Naive thymus-derived CD4-positive, alpha-beta T cell (primary cell): ENCODE measurements at regions of chr5 and their contacts with region 1.

Region 1: GRCh38 chr5:56050551-56051255 is 55.9 kb upstream of the IL6ST start:
- DNase-seq: peak in 8 of 9 donors; percentile 4 to 77 (median 66)
- ATAC-seq: peak; percentile 71
- H3K4me3 ChIP-seq: peak overlapping the region; percentile 34
- H3K4me3 Mint-ChIP-seq: peak overlapping the region; percentile 60 to 92 (median 76)
- H3K27ac ChIP-seq: peak overlapping the region; percentile 62
- H3K27ac Mint-ChIP-seq: peak overlapping the region; percentile 77 to 95 (median 89)
- H3K4me1 ChIP-seq: peaks cover 11 to 76% of the 10 kb centered on the region in 2 donors
- H3K4me1 Mint-ChIP-seq: peaks cover 40 to 95% (median 74%) of the 10 kb centered on the region in 7 donors
- H3K27me3 ChIP-seq: no peaks in the 10 kb centered on the region
- H3K27me3 Mint-ChIP-seq: peaks cover 0 to 5% (median 0%) of the 10 kb centered on the region in 5 donors

Region 2: DNA sequence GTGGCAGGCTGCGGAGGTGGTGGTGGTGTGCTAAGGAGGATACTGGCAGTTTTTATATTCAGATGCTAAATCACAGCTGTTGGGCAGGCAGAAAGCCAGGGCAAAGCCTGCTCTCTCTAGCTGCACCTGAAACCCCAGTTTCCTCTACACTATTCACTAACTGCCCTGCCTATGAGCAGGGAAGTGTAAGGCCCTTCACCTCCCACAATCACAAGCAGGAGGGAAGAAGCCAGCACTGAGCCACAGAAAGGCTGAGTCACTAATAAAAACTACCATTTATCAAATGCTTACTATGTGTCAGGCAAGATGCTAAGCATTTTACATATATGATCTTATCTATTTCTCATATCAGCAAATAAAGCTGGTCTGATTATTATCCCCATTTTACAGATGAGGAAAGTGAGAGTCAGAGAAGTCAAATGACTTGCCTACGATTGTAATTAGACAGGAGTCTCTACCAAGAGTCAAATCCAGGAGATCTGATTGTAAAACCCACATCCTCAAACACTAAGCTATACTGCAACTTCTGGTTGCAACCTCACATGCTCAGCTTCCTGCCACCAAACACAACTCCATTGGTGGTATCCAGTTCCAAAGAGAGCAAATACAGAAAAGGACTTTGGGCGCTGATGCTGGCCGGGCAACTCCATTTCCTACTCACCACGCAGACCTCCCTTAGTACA is 38.3 kb before region 1 on chr5:
- CTCF ChIA-PET with region 1: interaction called, 6 read pairs
- POLR2A ChIA-PET with region 1: interaction called, 27 read pairs
- intact Hi-C with region 1: loop called (anchors 1 to 2 kb)
- DNase-seq: peak in 7 of 9 donors; percentile 51 to 84 (median 75)
- ATAC-seq: peak; percentile 91
- H3K4me3 ChIP-seq: no peak overlapping the region
- H3K4me3 Mint-ChIP-seq: peak overlapping the region; percentile 13 to 84 (median 66)
- H3K27ac ChIP-seq: peak overlapping the region; percentile 57
- H3K27ac Mint-ChIP-seq: peak overlapping the region; percentile 71 to 96 (median 89)
- H3K4me1 ChIP-seq: peaks cover 26% of the 10 kb centered on the region in 2 donors
- H3K4me1 Mint-ChIP-seq: peaks cover 26 to 52% (median 49%) of the 10 kb centered on the region in 7 donors
- H3K27me3 ChIP-seq: no peaks in the 10 kb centered on the region
- H3K27me3 Mint-ChIP-seq: no peaks in the 10 kb centered on the region

Region 3: DNA sequence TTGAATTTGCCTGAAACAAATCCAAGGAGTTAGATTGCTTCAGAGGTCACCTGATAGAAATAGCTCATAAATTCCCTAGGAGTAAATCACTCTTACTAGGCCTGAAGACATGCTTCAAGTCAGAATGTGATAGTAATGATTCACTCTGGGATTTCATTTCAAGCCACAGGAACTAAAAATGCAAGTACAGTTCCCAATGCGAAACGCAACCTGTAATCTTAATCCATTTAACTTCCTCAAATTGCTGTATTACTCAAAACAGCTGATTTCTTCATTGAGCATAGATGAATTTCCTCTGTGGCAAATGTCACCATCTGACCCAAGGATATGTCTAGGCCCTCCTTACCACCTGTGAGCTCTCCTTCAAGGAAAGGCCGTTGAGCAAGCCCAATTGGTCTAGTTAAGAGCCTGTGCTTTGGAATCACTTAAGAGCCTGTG is 23.8 kb before region 1 on chr5:
- CTCF ChIA-PET with region 1: no interaction called
- POLR2A ChIA-PET with region 1: interaction called, 4 read pairs
- intact Hi-C with region 1: loop called in 1 of 2 experiments (anchors 2 kb)
- DNase-seq: no peak
- ATAC-seq: peak; percentile 78
- H3K4me3 ChIP-seq: no peak overlapping the region
- H3K4me3 Mint-ChIP-seq: no peak overlapping the region
- H3K27ac ChIP-seq: no peak overlapping the region
- H3K27ac Mint-ChIP-seq: peak overlapping the region in 1 of 9 donors; percentile 65
- H3K4me1 ChIP-seq: peaks cover 0 to 5% of the 10 kb centered on the region in 2 donors
- H3K4me1 Mint-ChIP-seq: peaks cover 3 to 42% (median 23%) of the 10 kb centered on the region in 7 donors
- H3K27me3 ChIP-seq: no peaks in the 10 kb centered on the region
- H3K27me3 Mint-ChIP-seq: peaks cover 0 to 29% (median 0%) of the 10 kb centered on the region in 5 donors

Region 4: DNA sequence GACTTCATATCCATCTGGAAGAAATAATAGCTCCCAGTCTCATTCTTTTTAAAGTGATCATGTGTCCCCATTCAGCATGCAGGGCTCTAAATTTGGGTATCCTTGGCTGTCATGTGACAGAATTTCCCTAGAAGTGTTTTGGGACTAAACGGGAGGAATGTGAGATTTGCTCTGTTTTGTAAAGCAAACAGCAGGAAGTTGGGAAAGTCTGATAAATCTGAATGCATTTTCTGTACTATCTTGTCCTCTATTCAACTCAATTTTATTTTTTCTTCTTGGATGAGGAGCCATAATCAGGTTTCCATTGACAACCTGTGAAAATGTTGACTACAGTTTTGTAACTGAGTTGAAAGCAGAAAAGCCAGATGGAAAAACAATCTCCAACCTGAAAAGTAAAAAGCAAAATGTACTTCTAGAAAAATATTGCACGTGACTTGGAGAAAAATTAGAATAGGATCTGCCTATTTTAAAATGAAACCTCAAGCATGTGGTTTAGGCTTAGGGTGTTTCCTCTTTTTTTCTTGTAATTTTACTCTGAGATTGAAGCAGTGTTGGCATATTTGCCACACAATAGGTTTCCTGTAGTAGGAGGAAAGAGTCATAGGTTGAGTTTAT is 20.3 kb after region 1 on chr5:
- CTCF ChIA-PET with region 1: interaction called, 4 read pairs
- POLR2A ChIA-PET with region 1: interaction called, 9 read pairs
- intact Hi-C with region 1: loop called in 1 of 2 experiments (anchors 2 kb)
- DNase-seq: peak in 7 of 9 donors; percentile 46 to 79 (median 69)
- ATAC-seq: peak; percentile 91
- H3K4me3 ChIP-seq: peak overlapping the region; percentile 31
- H3K4me3 Mint-ChIP-seq: peak overlapping the region; percentile 54 to 91 (median 78)
- H3K27ac ChIP-seq: peak overlapping the region; percentile 77
- H3K27ac Mint-ChIP-seq: peak overlapping the region; percentile 65 to 99 (median 91)
- H3K4me1 ChIP-seq: peaks cover 7 to 72% of the 10 kb centered on the region in 2 donors
- H3K4me1 Mint-ChIP-seq: peaks cover 41 to 95% (median 80%) of the 10 kb centered on the region in 7 donors
- H3K27me3 ChIP-seq: no peaks in the 10 kb centered on the region
- H3K27me3 Mint-ChIP-seq: peaks cover 0 to 3% (median 0%) of the 10 kb centered on the region in 5 donors

Region 5: GRCh38 chr5:56095579-56096102 is 44.9 kb after region 1 on chr5:
- CTCF ChIA-PET with region 1: interaction called, 3 read pairs
- POLR2A ChIA-PET with region 1: interaction called, 58 read pairs
- intact Hi-C with region 1: loop called in 1 of 2 experiments (anchors 5 kb)
- DNase-seq: no peak
- ATAC-seq: no peak
- H3K4me3 ChIP-seq: no peak overlapping the region
- H3K4me3 Mint-ChIP-seq: peak overlapping the region in 9 of 10 donors; percentile 32 to 77 (median 56)
- H3K27ac ChIP-seq: peak overlapping the region; percentile 54
- H3K27ac Mint-ChIP-seq: peak overlapping the region; percentile 66 to 100 (median 91)
- H3K4me1 ChIP-seq: peaks cover 0 to 94% of the 10 kb centered on the region in 2 donors
- H3K4me1 Mint-ChIP-seq: peaks cover 56 to 97% (median 86%) of the 10 kb centered on the region in 7 donors
- H3K27me3 ChIP-seq: no peaks in the 10 kb centered on the region
- H3K27me3 Mint-ChIP-seq: no peaks in the 10 kb centered on the region